Naive thymus-derived CD4-positive, alpha-beta T cell (primary cell): ENCODE measurements at regions of chr13 and their contacts with region 1.

Region 1: DNA sequence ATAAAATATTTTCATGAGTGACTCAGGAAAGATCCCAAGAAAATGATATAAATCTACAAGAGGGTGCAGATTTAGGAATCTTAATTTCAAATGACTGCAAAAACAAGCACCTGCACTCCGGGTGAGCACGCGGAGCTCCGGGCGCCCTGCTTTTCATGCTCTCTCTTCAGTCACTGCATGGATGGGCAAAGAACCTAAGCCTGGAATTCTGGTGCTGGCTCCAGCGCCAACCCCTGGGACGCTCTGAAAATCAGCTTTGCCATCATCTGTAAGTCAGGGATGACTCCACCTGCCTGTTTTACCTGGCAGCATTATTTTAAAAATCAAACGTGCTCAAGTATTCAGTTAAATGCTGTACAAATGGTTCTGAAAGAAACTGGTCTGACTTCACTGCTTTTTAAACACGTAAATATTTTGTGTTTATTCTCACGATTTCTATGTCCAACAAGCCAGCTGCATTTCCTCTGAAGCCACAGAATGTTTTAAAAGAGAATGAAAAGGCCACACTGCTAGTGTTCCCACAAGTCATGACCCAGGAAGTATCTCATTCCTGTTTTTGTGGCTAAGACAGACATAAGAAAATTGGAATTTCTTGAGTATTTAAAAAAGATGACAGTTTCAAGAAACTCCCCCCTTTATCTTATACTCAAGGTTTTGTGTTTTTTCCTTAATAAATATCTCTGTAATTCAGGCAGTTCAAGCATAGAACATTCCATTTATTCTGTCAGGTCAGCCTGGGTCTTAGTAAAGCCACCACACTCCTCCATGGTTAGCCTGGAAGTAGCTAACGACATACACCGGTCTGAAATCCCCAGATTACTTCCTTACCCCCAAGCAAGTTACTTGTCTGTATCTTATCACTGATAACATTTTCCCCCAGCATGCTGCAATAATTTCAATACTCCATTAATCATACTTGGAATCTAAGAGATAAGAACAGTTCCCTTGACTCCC is 81.1 kb downstream of the COL4A1 start:
- DNase-seq: no peak
- ATAC-seq: no peak
- H3K4me3 ChIP-seq: no peak overlapping the region
- H3K4me3 Mint-ChIP-seq: no peak overlapping the region
- H3K27ac ChIP-seq: no peak overlapping the region
- H3K27ac Mint-ChIP-seq: no peak overlapping the region
- H3K4me1 ChIP-seq: no peaks in the 10 kb centered on the region
- H3K4me1 Mint-ChIP-seq: no peaks in the 10 kb centered on the region
- H3K27me3 ChIP-seq: no peaks in the 10 kb centered on the region
- H3K27me3 Mint-ChIP-seq: peaks cover 4 to 23% (median 14%) of the 10 kb centered on the region in 5 donors

Region 2: DNA sequence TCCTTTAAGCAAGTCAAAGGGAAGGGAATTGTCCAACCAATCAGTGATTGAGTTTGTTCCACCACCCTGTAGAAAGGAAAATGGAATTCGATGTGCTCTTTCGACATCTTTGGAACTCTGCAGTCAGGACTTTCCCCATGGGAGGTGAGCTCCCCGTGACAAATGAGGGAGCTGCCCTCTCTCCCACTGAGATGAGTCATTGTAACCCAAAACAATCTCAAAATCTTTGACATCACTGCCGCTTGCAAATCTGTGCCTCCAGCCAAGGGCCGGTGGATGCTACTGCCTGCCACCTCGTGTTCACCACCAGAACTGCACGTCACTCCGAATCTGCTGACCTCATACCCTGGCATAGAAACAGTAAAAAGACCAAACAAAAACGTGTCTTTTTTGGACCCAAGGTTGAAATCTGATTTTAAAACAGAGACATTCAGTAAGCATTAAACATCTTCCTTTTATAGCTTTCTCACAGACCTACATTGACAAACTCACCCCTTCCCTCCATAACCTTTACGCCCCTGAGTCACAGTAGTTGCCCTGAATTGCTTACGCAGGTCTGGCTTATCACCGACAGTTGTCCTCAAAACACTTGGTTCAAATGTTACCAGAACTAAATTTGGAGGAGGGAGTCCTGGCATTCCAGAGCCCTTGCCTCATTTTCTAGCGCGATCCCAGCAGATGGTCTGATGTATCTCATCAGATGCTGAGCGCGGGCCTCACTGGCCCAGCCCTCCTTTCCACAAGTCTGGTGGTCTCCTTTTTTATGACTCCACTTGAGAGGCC is 186.4 kb after region 1 on chr13:
- CTCF ChIA-PET with region 1: interaction called, 31 read pairs
- POLR2A ChIA-PET with region 1: no interaction called
- intact Hi-C with region 1: loop called in 1 of 2 experiments (anchors 1 kb)
- DNase-seq: peak; percentile 9 to 62 (median 43)
- ATAC-seq: peak; percentile 89
- H3K4me3 ChIP-seq: no peak overlapping the region
- H3K4me3 Mint-ChIP-seq: no peak overlapping the region
- H3K27ac ChIP-seq: no peak overlapping the region
- H3K27ac Mint-ChIP-seq: peak overlapping the region in 1 of 9 donors; percentile 37
- H3K4me1 ChIP-seq: no peaks in the 10 kb centered on the region
- H3K4me1 Mint-ChIP-seq: peaks cover 0 to 7% (median 4%) of the 10 kb centered on the region in 7 donors
- H3K27me3 ChIP-seq: peaks cover 0 to 9% of the 10 kb centered on the region in 2 donors
- H3K27me3 Mint-ChIP-seq: peaks cover 66 to 79% (median 73%) of the 10 kb centered on the region in 5 donors

Region 3: DNA sequence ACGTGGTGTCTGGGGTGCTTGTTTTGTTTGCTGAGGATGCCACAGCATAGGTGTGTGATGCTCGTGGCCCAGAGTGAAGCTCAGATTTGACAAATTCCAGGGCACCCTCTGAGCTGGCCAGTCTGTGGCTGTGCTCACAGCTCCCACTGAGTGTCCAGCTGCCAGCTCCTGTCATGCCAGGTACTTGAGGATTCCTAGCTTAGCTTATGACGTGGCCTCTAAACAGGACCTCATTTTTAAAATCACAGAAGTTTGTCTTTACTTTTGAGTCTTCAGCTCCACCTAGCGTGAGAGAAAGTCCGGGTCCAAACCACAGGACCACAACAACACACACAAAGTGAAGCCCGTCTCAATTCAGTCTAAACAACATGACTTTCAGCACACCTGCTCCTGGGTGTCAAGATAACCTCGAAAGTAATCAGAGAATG is 218.4 kb after region 1 on chr13:
- CTCF ChIA-PET with region 1: no interaction called
- POLR2A ChIA-PET with region 1: no interaction called
- intact Hi-C with region 1: loop called in 1 of 2 experiments (anchors 1 kb)
- DNase-seq: no peak
- ATAC-seq: no peak
- H3K4me3 ChIP-seq: no peak overlapping the region
- H3K4me3 Mint-ChIP-seq: no peak overlapping the region
- H3K27ac ChIP-seq: no peak overlapping the region
- H3K27ac Mint-ChIP-seq: no peak overlapping the region
- H3K4me1 ChIP-seq: no peaks in the 10 kb centered on the region
- H3K4me1 Mint-ChIP-seq: no peaks in the 10 kb centered on the region
- H3K27me3 ChIP-seq: no peaks in the 10 kb centered on the region
- H3K27me3 Mint-ChIP-seq: peaks cover 25 to 58% (median 51%) of the 10 kb centered on the region in 5 donors

Region 4: GRCh38 chr13:110819203-110820014 is 593.5 kb after region 1 on chr13:
- CTCF ChIA-PET with region 1: no interaction called
- POLR2A ChIA-PET with region 1: no interaction called
- intact Hi-C with region 1: loop called in 1 of 2 experiments (anchors 2 kb)
- DNase-seq: peak; percentile 39 to 78 (median 66)
- ATAC-seq: peak; percentile 95
- H3K4me3 ChIP-seq: no peak overlapping the region
- H3K4me3 Mint-ChIP-seq: peak overlapping the region in 3 of 10 donors; percentile 16 to 21 (median 19)
- H3K27ac ChIP-seq: no peak overlapping the region
- H3K27ac Mint-ChIP-seq: peak overlapping the region in 1 of 9 donors; percentile 72
- H3K4me1 ChIP-seq: no peaks in the 10 kb centered on the region
- H3K4me1 Mint-ChIP-seq: peaks cover 0 to 17% (median 14%) of the 10 kb centered on the region in 7 donors
- H3K27me3 ChIP-seq: no peaks in the 10 kb centered on the region
- H3K27me3 Mint-ChIP-seq: peaks cover 0 to 13% (median 0%) of the 10 kb centered on the region in 5 donors

Region 5: GRCh38 chr13:111228262-111229144 is 1002.6 kb after region 1 on chr13:
- CTCF ChIA-PET with region 1: no interaction called
- POLR2A ChIA-PET with region 1: no interaction called
- intact Hi-C with region 1: loop called in 1 of 2 experiments (anchors 10 kb)
- DNase-seq: no peak
- ATAC-seq: no peak
- H3K4me3 ChIP-seq: no peak overlapping the region
- H3K4me3 Mint-ChIP-seq: no peak overlapping the region
- H3K27ac ChIP-seq: no peak overlapping the region
- H3K27ac Mint-ChIP-seq: no peak overlapping the region
- H3K4me1 ChIP-seq: no peaks in the 10 kb centered on the region
- H3K4me1 Mint-ChIP-seq: peaks cover 27 to 68% (median 55%) of the 10 kb centered on the region in 7 donors
- H3K27me3 ChIP-seq: no peaks in the 10 kb centered on the region
- H3K27me3 Mint-ChIP-seq: no peaks in the 10 kb centered on the region